Activated CD4-positive, alpha-beta T cell treated with anti-CD3 and anti-CD28 coated beads, Interleukin-2, amount 10 ng/mL, durations not matched to agents 24 days and 14 days (primary cell): ENCODE measurements at regions of chr18 and their contacts with region 1.

Region 1: DNA sequence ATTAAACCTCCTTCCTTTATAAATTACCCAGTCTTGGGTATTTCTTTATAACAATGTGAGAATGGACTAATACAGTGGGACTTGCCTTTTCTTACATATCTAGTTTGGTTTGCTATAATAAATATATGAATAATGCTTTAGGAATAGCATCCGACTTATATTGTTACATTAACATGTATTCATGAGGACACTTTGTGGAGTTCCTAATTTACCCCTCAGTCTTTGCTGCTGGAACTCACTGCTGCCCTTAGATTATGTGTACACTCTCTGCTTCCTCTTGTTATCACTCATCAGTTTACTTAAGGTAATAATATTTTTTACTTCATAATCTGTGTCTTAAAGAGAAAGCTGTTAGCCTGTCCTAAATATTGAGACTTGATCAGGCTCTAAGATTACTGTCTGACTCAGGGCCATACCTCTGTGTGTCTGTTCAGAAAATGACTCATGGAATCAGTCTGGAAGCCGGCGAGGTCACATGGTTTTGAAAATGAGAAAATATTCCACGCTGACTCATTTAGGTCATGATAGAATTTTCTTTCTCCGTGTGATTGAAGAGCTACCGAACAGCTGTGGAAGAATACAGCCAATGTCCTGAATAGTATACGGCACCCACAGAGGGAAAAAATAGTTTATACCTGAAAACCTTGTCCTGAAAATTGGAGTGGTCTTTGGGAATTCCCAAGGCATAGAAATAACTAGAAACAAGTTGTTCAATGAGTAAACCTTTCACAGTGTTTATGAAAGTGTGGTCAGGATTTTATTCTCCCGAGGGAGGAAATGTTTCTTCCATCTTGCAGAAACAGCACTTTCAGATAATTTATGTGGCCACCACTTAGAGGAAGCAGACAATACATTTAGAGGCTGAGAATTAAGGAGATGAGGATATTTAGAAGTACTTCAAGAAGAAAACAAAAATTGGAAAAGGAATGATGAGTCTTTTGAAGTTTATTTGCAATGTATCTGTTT is 156.4 kb downstream of the DSEL start:
- DNase-seq: no peak
- H3K4me3 Mint-ChIP-seq: peak overlapping the region; percentile 12
- H3K27ac Mint-ChIP-seq: no peak overlapping the region
- H3K4me1 Mint-ChIP-seq: peaks cover 5% of the 10 kb centered on the region
- H3K27me3 Mint-ChIP-seq: no peaks in the 10 kb centered on the region

Region 2: DNA sequence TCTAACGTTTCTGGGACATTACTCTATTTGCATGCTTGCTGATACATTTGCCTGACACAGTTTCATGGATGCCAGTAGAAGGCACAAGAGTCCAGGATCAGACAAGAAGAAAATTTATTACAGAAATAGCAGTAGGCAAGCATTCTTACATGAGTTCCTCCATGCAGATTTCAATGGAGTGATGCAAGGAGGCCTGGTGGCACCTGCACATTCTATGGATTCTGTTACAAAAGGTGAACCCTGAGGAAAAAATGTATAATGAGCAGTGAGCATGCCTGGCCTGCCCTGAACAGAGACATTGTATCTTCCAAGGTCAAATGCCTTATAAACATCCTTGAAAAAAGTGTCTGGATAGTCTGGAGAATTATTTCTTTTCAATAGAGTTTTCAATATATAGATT is 13.5 kb after region 1 on chr18:
- intact Hi-C with region 1: no loop called
- DNase-seq: no peak
- H3K4me3 Mint-ChIP-seq: no peak overlapping the region
- H3K27ac Mint-ChIP-seq: no peak overlapping the region
- H3K4me1 Mint-ChIP-seq: no peaks in the 10 kb centered on the region
- H3K27me3 Mint-ChIP-seq: peaks cover under 1% of the 10 kb centered on the region

Region 3: GRCh38 chr18:67417864-67418523 is 57.8 kb after region 1 on chr18:
- intact Hi-C with region 1: loop called (anchors 5 kb)
- DNase-seq: peak; percentile 78
- H3K4me3 Mint-ChIP-seq: peak overlapping the region; percentile 24
- H3K27ac Mint-ChIP-seq: no peak overlapping the region
- H3K4me1 Mint-ChIP-seq: peaks cover 7% of the 10 kb centered on the region
- H3K27me3 Mint-ChIP-seq: peaks cover 2% of the 10 kb centered on the region